HCT116 (cell line): ENCODE measurements at regions of chr10 and their contacts with region 1.

Region 1: GRCh38 chr10:68032113-68032512 is 43.0 kb downstream of the HERC4 start:
- DNase-seq: no peak
- ATAC-seq: no peak
- H3K4me3 ChIP-seq: no peak overlapping the region
- H3K27ac ChIP-seq: no peak overlapping the region
- H3K4me1 ChIP-seq: no peaks in the 10 kb centered on the region
- H3K27me3 ChIP-seq: no peaks in the 10 kb centered on the region
- CTCF ChIP-seq: no peak
- POLR2A ChIP-seq: no peak
- RAD21 ChIP-seq: no peak

Region 2: DNA sequence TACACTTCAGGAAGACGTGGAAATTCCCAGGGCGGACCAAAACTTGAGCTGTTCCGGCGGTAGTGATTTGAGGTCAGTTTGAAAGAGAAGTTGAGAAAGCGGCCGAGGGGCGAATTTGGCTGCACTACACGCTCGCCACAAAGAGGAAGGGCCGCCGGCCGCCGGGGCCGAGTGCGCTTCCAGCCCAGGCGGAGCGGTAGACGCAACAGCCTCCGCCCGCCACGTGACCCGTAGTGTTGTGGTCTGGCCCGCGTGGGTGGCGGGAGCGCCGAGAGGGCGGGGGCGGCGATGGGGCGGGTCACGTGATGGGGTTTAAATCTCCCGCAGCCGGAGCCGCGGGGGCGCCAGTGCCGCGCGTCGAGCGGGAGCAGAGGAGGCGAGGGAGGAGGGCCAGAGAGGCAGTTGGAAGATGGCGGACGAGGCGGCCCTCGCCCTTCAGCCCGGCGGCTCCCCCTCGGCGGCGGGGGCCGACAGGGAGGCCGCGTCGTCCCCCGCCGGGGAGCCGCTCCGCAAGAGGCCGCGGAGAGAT is 147.7 kb before region 1 on chr10 and contains the start of gene SIRT1:
- CTCF ChIA-PET with region 1: no interaction called
- POLR2A ChIA-PET with region 1: no interaction called
- RAD21 ChIA-PET with region 1: no interaction called
- intact Hi-C with region 1: no loop called
- DNase-seq: peak; percentile 72
- ATAC-seq: peak; percentile 89
- H3K4me3 ChIP-seq: peak within 1 kb of the TSS; percentile 86
- H3K27ac ChIP-seq: peak within 1 kb of the TSS; percentile 91
- H3K4me1 ChIP-seq: peaks cover 5 to 22% of the 10 kb centered on the region in 2 experiments; a peak in 3 of 4 replicates
- H3K27me3 ChIP-seq: no peaks in the 10 kb centered on the region
- CTCF ChIP-seq: no peak
- POLR2A ChIP-seq: peak; percentile 83
- RAD21 ChIP-seq: no peak
- total RNA-seq, gene SIRT1: 22.8 TPM

Region 3: GRCh38 chr10:67934336-67934735 is 97.8 kb before region 1 on chr10:
- CTCF ChIA-PET with region 1: no interaction called
- POLR2A ChIA-PET with region 1: no interaction called
- RAD21 ChIA-PET with region 1: no interaction called
- intact Hi-C with region 1: loop called (anchors 5 kb)
- DNase-seq: no peak
- ATAC-seq: no peak
- H3K4me3 ChIP-seq: no peak overlapping the region
- H3K27ac ChIP-seq: no peak overlapping the region
- H3K4me1 ChIP-seq: no peaks in the 10 kb centered on the region
- H3K27me3 ChIP-seq: no peaks in the 10 kb centered on the region
- CTCF ChIP-seq: no peak
- POLR2A ChIP-seq: no peak
- RAD21 ChIP-seq: no peak